ENCODE measurements at regions of chr20 and their contacts with region 1.

Region 1: DNA sequence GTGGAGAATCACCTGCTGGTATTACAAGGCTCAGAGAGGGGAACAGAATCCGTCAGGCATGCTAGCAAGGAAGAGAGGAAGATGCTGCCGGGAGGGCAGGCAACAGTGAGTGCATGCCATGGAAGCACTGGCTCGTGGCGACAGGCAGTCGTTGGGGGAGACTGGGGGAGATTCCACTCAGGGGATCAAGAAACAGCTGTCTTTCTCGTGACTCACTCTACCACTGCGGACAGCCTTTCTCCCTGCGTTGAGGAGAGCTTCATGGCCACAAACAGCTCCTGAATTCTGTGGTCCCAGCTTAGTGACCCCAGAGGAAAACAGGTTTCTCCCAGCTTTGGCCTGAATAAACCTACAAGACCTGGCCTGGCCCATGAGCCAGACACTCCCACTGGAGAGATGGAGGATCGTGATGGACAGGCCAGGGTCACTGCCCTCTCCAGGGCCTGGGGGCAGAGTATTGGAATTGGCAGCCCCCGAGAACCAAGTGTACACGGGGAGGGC is 37.4 kb downstream of the HM13 start:
- DNase-seq: no peak
- H3K4me3 ChIP-seq: no peak overlapping the region
- H3K27ac ChIP-seq: no peak overlapping the region
- H3K4me1 ChIP-seq: peaks cover 7% of the 10 kb centered on the region
- H3K27me3 ChIP-seq: no peaks in the 10 kb centered on the region
- CTCF ChIP-seq: no peak

Region 2: DNA sequence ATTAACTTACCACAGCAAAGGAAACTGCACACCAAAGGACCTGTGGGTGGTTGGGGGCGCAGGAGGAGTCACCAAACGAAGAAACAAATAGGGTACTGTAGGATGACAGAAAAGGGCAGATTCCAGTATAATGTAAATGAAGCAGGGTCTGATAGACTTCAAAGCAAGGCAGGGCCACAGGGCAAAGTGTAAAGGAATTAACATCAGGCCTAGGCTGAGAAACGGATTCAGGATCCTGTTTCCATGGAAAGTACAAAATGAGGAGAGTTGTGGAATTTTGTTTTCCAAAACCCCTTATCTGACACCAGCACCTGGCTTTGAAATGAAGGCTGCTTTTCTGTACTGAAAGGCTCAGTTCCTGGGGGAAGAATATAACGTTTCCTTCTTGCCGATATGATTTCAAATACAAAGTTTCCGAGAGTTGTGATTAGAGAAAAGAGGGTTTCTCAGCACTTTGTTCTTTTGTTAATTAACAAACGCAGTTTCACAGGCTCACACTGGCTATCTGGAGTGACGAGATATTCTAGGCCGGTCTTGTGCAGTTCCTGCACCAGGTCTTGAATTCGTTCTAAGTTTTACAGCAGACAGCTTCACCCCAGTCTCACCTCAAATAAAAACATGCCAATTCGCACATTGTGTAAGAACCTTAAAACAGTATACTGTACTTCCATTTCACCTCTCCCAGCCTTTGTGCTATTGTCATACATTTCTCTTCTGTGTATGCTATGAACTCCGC is 105.4 kb before region 1 on chr20:
- CTCF ChIA-PET with region 1: no interaction called
- dilution Hi-C with region 1: loop called (anchors 5 kb)
- in situ Hi-C with region 1: no loop called
- intact Hi-C with region 1: no loop called
- DNase-seq: no peak
- H3K4me3 ChIP-seq: no peak overlapping the region
- H3K27ac ChIP-seq: no peak overlapping the region
- H3K4me1 ChIP-seq: no peaks in the 10 kb centered on the region
- H3K27me3 ChIP-seq: no peaks in the 10 kb centered on the region
- CTCF ChIP-seq: no peak